HepG2 (cell line): ENCODE measurements at regions of chr20 and their contacts with region 1.

Region 1: GRCh38 chr20:62685781-62686555 is 22.7 kb upstream of the NTSR1 start:
- DNase-seq: peak; percentile 24
- ATAC-seq: peak; percentile 17
- H3K4me3 ChIP-seq: no peak overlapping the region; a peak in 1 of 6 replicates
- H3K27ac ChIP-seq: no peak overlapping the region
- H3K4me1 ChIP-seq: peaks cover 8% of the 10 kb centered on the region; the same call in 1 of the 2 replicates
- H3K27me3 ChIP-seq: peaks cover 27 to 84% of the 10 kb centered on the region in 2 experiments
- CTCF ChIP-seq: no peak
- EP300 ChIP-seq: no peak
- POLR2A ChIP-seq: no peak
- RAD21 ChIP-seq: no peak

Region 2: GRCh38 chr20:62776692-62777527 is 90.9 kb after region 1 on chr20:
- CTCF ChIA-PET with region 1: no interaction called
- POLR2A ChIA-PET with region 1: no interaction called
- in situ Hi-C with region 1: loop called (anchors 10 kb)
- intact Hi-C with region 1: no loop called
- DNase-seq: peak; percentile 58
- ATAC-seq: peak; percentile 3
- H3K4me3 ChIP-seq: peak overlapping the region in 2 of 3 experiments; percentile 32 to 56; a peak in 3 of 6 replicates
- H3K27ac ChIP-seq: no peak overlapping the region
- H3K4me1 ChIP-seq: peaks cover 33% of the 10 kb centered on the region
- H3K27me3 ChIP-seq: peaks cover 25 to 70% of the 10 kb centered on the region in 2 experiments
- CTCF ChIP-seq: no peak; the same call in 1 of the 2 replicates
- EP300 ChIP-seq: no peak
- POLR2A ChIP-seq: no peak
- RAD21 ChIP-seq: no peak